A549 (cell line): ENCODE measurements at regions of chr10 and their contacts with region 1.

Region 1: GRCh38 chr10:92517034-92517655 is 56.7 kb downstream of the IDE start:
- DNase-seq: peak; percentile 49 to 78
- ATAC-seq: peak; percentile 90 to 99
- H3K4me3 ChIP-seq: no peak overlapping the region
- H3K27ac ChIP-seq: no peak overlapping the region
- H3K4me1 ChIP-seq: no peaks in the 10 kb centered on the region
- CTCF ChIP-seq: peak; percentile 89
- EP300 ChIP-seq: no peak
- POLR2A ChIP-seq: no peak
- RAD21 ChIP-seq: peak; percentile 61 to 68

Region 2: GRCh38 chr10:92530421-92530820 is 13.3 kb after region 1 on chr10:
- CTCF ChIA-PET with region 1: interaction called, 25 read pairs
- POLR2A ChIA-PET with region 1: no interaction called
- DNase-seq: no peak
- ATAC-seq: no peak
- H3K4me3 ChIP-seq: no peak overlapping the region
- H3K27ac ChIP-seq: no peak overlapping the region
- H3K4me1 ChIP-seq: no peaks in the 10 kb centered on the region
- CTCF ChIP-seq: no peak
- EP300 ChIP-seq: no peak
- POLR2A ChIP-seq: no peak
- RAD21 ChIP-seq: no peak

Region 3: DNA sequence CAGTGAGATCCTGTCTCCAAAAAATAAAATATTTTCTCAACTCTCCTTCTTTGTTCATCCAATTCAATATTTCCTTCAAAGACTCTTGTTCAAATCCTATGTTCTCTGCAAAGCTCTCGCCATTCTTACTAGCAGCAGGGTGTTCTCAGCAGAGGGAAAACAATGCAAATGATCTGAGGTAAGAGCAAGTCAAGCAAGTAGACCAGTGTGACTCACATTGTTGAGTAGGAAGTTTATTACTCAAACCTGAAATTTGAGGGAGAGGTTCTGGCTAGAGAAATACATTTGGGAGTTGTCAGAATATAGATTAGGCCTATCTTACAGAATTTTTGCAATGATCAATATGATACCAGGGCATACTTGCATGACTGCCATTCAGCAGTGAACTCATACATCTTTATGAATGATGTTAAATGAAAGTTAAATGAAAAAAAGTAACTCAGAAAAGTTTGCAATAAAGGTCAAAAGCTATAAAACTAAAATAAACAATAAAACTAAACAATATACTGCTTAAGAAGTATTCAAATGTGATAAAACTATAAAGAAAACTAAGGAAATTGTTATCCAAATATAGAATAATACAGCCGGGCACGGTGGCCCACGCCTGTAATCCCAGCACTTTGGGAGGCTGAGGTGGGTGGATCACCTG is 50.9 kb after region 1 on chr10:
- CTCF ChIA-PET with region 1: interaction called, 79 read pairs
- POLR2A ChIA-PET with region 1: interaction called, 4 read pairs
- DNase-seq: no peak
- ATAC-seq: no peak
- H3K4me3 ChIP-seq: no peak overlapping the region
- H3K27ac ChIP-seq: no peak overlapping the region
- H3K4me1 ChIP-seq: peaks cover 23% of the 10 kb centered on the region
- CTCF ChIP-seq: no peak
- EP300 ChIP-seq: no peak
- POLR2A ChIP-seq: no peak
- RAD21 ChIP-seq: no peak